Mucosa of descending colon (tissue), 3 donors: ENCODE measurements at regions of chr7 and their contacts with region 1.

Region 1: DNA sequence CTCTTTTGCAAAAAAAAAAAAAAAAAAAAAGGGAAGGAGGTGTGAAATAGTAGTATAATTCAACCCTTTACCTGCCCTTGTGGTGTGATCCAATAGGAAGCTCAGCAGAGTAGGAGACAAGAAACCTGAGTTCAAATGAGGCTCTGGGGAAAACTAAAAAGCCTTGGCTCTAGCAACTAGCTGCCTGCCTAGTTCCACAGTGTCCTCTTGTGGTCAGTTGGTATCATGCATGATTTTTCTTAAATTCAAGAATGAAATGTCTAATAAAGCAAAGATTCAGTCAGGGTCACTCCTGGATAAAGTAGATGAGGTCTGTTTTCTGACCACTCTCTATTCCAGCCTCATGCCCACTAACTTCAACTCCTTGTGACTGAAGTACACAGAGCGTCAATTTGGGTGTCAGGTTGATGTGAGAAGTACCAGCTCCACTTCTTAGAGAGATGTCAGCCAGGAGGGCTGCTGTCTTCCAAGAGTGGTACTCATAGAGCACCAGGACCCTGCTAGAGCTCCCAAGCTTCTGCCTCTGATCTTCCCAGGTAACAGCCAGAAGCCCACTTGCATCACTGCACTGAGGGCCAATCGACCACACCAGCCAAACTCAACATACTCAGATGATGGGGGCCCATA is 10.5 kb downstream of the LSM5 start:
- DNase-seq: peak in 1 of 3 donors; percentile 51
- ATAC-seq: peak; percentile 59
- H3K4me3 ChIP-seq: no peak overlapping the region
- H3K4me1 ChIP-seq: no peaks in the 10 kb centered on the region
- CTCF ChIP-seq: peak; percentile 56

Region 2: DNA sequence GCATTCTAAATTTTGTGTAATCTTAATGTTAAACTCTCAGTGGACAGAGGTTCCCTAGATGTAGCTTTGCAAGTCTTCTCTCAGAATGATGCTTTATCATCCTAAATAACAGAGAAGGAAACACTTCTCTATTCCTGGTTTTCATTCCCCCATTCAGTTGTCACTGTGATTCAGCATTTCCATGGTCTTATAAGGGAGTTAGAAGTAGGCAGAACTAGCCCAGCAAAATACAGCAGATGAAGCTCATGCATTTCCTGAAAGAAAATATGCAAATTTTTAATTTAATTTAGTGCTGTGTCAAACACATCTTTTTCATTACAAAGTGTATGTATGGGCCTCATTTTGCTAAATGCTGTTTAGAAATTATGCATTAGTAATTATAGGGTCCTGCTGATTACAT is 895.7 kb before region 1 on chr7:
- intact Hi-C with region 1: no loop called
- DNase-seq: no peak
- ATAC-seq: no peak
- H3K4me3 ChIP-seq: no peak overlapping the region
- H3K4me1 ChIP-seq: no peaks in the 10 kb centered on the region
- CTCF ChIP-seq: no peak

Region 3: GRCh38 chr7:32218154-32218467 is 261.6 kb before region 1 on chr7:
- intact Hi-C with region 1: loop called in 1 of 2 experiments (anchors 10 kb)
- DNase-seq: no peak
- ATAC-seq: no peak
- H3K4me3 ChIP-seq: no peak overlapping the region
- H3K4me1 ChIP-seq: no peaks in the 10 kb centered on the region
- CTCF ChIP-seq: no peak